ENCODE measurements at regions of chr3 and their contacts with region 1.

Region 1: GRCh38 chr3:182683453-182683852 is 109.9 kb upstream of the ATP11B start:
- DNase-seq: peak; percentile 34
- ATAC-seq: peak; percentile 60
- H3K4me3 Mint-ChIP-seq: peak overlapping the region; percentile 89
- H3K27ac Mint-ChIP-seq: peak overlapping the region; percentile 15
- H3K4me1 Mint-ChIP-seq: peaks cover 7% of the 10 kb centered on the region
- H3K27me3 Mint-ChIP-seq: peaks cover 33% of the 10 kb centered on the region
- CTCF ChIP-seq: peak; percentile 87

Region 2: DNA sequence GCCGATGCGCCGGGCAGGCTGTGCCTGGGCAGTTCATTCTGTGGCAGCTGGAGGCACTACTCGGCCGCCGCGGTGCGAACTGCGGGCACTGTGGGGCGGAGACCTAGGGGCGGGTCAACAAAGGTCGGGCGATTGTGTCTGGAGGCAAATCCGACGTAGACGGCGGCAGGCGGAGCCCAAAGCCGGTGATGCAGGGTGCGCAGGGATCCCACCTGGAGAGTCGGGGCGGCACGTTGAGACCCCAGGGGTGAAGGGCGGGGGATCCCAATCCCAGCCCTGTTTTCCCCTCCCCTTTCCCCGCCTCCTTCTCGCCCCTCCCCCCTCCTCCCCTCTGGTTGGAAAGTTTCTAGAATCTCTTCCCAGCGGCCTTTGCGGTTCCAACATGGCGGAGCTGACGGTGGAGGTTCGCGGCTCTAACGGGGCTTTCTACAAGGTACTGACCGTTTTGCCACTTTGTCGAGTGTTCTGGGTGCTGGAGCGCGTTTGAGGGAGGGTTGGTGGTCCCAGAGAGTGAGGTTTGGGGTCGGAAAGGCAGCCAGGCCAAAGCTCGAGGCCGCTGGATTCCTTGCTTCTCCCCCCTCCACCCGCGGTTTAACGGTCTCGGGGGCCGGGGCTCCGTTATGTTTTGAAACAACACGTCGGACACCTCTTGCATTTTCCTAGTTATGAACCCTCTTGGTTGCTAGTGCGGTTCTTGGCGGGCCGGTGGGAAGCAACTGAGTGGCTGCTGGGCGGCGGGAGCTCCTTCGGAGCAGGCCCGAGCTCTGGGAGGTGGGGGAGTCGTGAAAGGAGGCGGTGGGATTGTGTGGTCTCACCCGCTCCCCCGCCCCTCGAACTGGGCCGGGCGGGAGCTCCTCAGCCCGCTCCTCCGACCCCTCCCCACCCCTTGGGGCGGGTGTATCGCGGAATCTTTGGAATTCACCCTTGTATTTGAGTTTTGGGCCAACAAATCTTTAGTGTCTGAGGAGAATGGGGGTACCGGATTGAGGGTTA is 1770.9 kb before region 1 on chr3 and contains the start of gene FXR1:
- CTCF ChIA-PET with region 1: no interaction called
- POLR2A ChIA-PET with region 1: no interaction called
- intact Hi-C with region 1: loop called (anchors 1 kb)
- DNase-seq: peak; percentile 90
- ATAC-seq: peak; percentile 95
- H3K4me3 Mint-ChIP-seq: peak within 1 kb of the TSS; percentile 94
- H3K27ac Mint-ChIP-seq: peak within 1 kb of the TSS; percentile 95
- H3K4me1 Mint-ChIP-seq: peaks cover 52% of the 10 kb centered on the region
- H3K27me3 Mint-ChIP-seq: no peaks in the 10 kb centered on the region
- CTCF ChIP-seq: no peak
- total RNA-seq, gene FXR1: 130 TPM in 2 replicates

Region 3: GRCh38 chr3:181326637-181327223 is 1356.7 kb before region 1 on chr3:
- CTCF ChIA-PET with region 1: interaction called, 44 read pairs
- POLR2A ChIA-PET with region 1: no interaction called
- intact Hi-C with region 1: no loop called
- DNase-seq: no peak
- ATAC-seq: no peak
- H3K4me3 Mint-ChIP-seq: no peak overlapping the region
- H3K27ac Mint-ChIP-seq: no peak overlapping the region
- H3K4me1 Mint-ChIP-seq: no peaks in the 10 kb centered on the region
- H3K27me3 Mint-ChIP-seq: peaks cover 2% of the 10 kb centered on the region
- CTCF ChIP-seq: no peak

Region 4: DNA sequence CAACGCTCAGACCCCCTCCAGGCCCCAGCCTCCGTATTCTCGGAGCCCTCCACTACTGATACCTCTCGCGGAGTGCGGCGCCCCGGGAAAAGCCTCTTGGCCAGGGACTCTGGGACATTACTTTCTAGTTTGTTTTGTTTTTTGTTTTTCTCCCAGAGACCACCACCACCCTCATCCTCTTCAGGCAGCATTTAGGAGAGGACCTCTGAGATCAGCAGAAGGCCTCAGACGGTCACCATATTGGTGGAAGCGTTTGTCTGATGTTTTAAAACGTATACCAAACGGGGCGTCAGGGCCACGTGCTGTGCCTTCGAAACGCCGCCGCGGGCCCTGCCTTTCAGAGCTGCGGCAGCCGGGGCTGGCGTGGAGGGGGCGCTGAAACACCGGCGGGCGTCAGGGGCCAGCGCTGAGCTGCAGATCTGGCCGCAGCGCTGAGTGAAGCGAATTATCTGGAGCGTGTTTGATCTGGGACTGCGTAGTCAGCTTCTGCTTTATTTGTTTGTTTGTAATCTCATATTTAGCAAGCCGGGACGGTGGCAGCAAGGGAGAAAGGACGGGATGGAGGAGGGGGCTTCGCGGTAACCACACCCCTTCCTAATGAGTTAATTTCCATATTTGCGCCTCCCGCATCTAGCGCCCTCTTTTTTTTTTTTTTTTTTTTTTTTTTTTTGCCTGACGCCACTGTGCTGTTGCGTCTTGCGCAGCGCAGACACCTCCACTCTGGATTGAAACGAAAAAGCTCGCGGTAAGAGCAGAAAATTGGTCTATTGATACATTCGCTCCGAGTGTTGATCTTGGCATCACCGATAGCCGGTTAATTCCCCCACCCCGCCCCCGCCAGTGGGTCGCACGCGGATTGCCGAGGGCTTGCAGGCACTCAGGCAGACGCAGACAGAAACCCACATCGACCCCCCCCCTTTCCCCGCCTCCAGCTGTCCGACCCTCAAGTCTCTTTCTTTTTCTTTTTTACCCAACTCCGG is 956.8 kb before region 1 on chr3:
- CTCF ChIA-PET with region 1: no interaction called
- POLR2A ChIA-PET with region 1: no interaction called
- intact Hi-C with region 1: loop called (anchors 1 kb)
- DNase-seq: no peak
- ATAC-seq: no peak
- H3K4me3 Mint-ChIP-seq: peak overlapping the region; percentile 84
- H3K27ac Mint-ChIP-seq: no peak overlapping the region
- H3K4me1 Mint-ChIP-seq: peaks cover 17% of the 10 kb centered on the region
- H3K27me3 Mint-ChIP-seq: peaks cover 81% of the 10 kb centered on the region
- CTCF ChIP-seq: no peak

Region 5: GRCh38 chr3:182392182-182392937 is 291.1 kb before region 1 on chr3:
- CTCF ChIA-PET with region 1: interaction called, 3 read pairs
- POLR2A ChIA-PET with region 1: no interaction called
- intact Hi-C with region 1: loop called (anchors 2 kb)
- DNase-seq: no peak
- ATAC-seq: no peak
- H3K4me3 Mint-ChIP-seq: no peak overlapping the region
- H3K27ac Mint-ChIP-seq: no peak overlapping the region
- H3K4me1 Mint-ChIP-seq: no peaks in the 10 kb centered on the region
- H3K27me3 Mint-ChIP-seq: peaks cover 2% of the 10 kb centered on the region
- CTCF ChIP-seq: no peak

Region 6: GRCh38 chr3:182404031-182404430 is 279.4 kb before region 1 on chr3:
- CTCF ChIA-PET with region 1: no interaction called
- POLR2A ChIA-PET with region 1: no interaction called
- intact Hi-C with region 1: no loop called
- DNase-seq: no peak
- ATAC-seq: no peak
- H3K4me3 Mint-ChIP-seq: no peak overlapping the region
- H3K27ac Mint-ChIP-seq: no peak overlapping the region
- H3K4me1 Mint-ChIP-seq: no peaks in the 10 kb centered on the region
- H3K27me3 Mint-ChIP-seq: peaks cover 5% of the 10 kb centered on the region
- CTCF ChIP-seq: no peak